ENCODE measurements at regions of chr10 and their contacts with region 1.

Region 1: DNA sequence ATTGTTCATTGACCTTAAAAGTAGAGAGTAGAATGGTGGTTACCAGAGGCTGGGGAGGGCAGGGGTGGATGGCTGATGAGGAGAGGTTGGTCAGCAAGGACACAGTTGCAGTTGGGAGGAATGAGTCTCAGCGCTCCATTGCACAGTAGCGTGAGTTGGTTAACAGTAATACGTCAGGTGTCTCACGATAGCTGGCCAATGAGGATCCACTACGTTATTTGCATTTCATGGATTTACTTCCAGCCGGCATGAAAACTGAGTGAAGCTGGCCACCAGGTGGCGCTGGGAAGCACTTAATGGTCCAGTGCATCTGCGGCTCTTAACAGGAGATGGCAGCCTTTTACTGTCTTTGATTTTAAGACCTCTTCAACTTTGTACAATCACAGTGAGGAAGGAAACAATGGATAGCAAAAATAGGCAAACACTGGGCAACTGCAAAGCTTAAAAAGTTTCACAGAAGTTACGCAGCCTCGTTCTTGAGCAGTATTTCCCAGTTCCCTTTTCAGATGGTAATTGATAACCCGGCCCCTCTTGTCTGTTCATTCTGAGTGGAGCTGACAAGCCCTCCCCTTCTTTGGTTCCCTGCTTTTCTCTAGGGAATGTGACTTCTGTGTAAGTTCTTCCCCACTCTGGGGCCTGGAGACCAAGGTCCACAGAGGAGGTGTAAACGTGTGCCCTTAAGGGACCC is 23.7 kb downstream of the AKR1E2 start:
- DNase-seq: peak; percentile 74 to 85 (median 82)
- ATAC-seq: peak; percentile 94
- H3K4me3 ChIP-seq: no peak overlapping the region
- H3K4me3 Mint-ChIP-seq: peak overlapping the region in 2 of 10 donors; percentile 21 to 51
- H3K27ac ChIP-seq: no peak overlapping the region
- H3K27ac Mint-ChIP-seq: peak overlapping the region in 6 of 9 donors; percentile 21 to 65 (median 46)
- H3K4me1 ChIP-seq: no peaks in the 10 kb centered on the region
- H3K4me1 Mint-ChIP-seq: peaks cover 0 to 12% (median 7%) of the 10 kb centered on the region in 7 donors
- H3K27me3 ChIP-seq: no peaks in the 10 kb centered on the region
- H3K27me3 Mint-ChIP-seq: no peaks in the 10 kb centered on the region

Region 2: GRCh38 chr10:4498711-4499251 is 350.9 kb before region 1 on chr10:
- CTCF ChIA-PET with region 1: no interaction called
- POLR2A ChIA-PET with region 1: no interaction called
- intact Hi-C with region 1: no loop called
- DNase-seq: no peak
- ATAC-seq: no peak
- H3K4me3 ChIP-seq: no peak overlapping the region
- H3K4me3 Mint-ChIP-seq: no peak overlapping the region
- H3K27ac ChIP-seq: no peak overlapping the region
- H3K27ac Mint-ChIP-seq: no peak overlapping the region
- H3K4me1 ChIP-seq: no peaks in the 10 kb centered on the region
- H3K4me1 Mint-ChIP-seq: no peaks in the 10 kb centered on the region
- H3K27me3 ChIP-seq: no peaks in the 10 kb centered on the region
- H3K27me3 Mint-ChIP-seq: peaks cover 0 to 37% (median 0%) of the 10 kb centered on the region in 5 donors

Region 3: DNA sequence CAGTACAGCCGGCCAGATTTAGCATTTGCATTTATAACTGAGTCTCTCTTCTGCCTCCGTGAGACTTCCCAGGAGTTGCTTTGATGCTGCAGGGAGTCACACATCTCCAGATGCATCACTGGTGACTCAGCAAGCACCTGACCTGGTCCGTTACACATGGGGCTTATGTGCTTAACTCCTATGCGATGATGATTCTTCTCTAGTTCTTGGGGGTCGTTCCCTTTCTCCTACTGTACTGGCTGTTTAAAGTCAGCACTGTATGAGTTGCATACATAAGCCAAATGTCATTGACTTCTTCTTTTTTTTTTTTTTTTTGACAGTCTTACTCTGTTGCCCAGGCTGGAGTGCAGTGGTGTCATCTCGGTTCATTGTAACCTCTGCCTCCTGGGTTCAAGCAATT is 36.7 kb before region 1 on chr10:
- CTCF ChIA-PET with region 1: interaction called, 23 read pairs
- POLR2A ChIA-PET with region 1: no interaction called
- intact Hi-C with region 1: loop called (anchors 1 kb)
- DNase-seq: no peak
- ATAC-seq: peak; percentile 35
- H3K4me3 ChIP-seq: no peak overlapping the region
- H3K4me3 Mint-ChIP-seq: no peak overlapping the region
- H3K27ac ChIP-seq: no peak overlapping the region
- H3K27ac Mint-ChIP-seq: no peak overlapping the region
- H3K4me1 ChIP-seq: no peaks in the 10 kb centered on the region
- H3K4me1 Mint-ChIP-seq: peaks cover 0 to 4% (median 0%) of the 10 kb centered on the region in 7 donors
- H3K27me3 ChIP-seq: no peaks in the 10 kb centered on the region
- H3K27me3 Mint-ChIP-seq: peaks cover 0 to 14% (median 8%) of the 10 kb centered on the region in 5 donors

Region 4: GRCh38 chr10:4981722-4982471 is 132.2 kb after region 1 on chr10:
- CTCF ChIA-PET with region 1: interaction called, 8 read pairs
- POLR2A ChIA-PET with region 1: no interaction called
- intact Hi-C with region 1: loop called in 1 of 2 experiments (anchors 10 kb)
- DNase-seq: peak in 2 of 9 donors; percentile 3 to 18
- ATAC-seq: no peak
- H3K4me3 ChIP-seq: no peak overlapping the region
- H3K4me3 Mint-ChIP-seq: no peak overlapping the region
- H3K27ac ChIP-seq: no peak overlapping the region
- H3K27ac Mint-ChIP-seq: peak overlapping the region in 1 of 9 donors; percentile 67
- H3K4me1 ChIP-seq: no peaks in the 10 kb centered on the region
- H3K4me1 Mint-ChIP-seq: peaks cover 0 to 9% (median 0%) of the 10 kb centered on the region in 7 donors
- H3K27me3 ChIP-seq: no peaks in the 10 kb centered on the region
- H3K27me3 Mint-ChIP-seq: peaks cover 0 to 5% (median 0%) of the 10 kb centered on the region in 5 donors

Region 5: GRCh38 chr10:5283305-5284158 is 433.8 kb after region 1 on chr10:
- CTCF ChIA-PET with region 1: interaction called, 36 read pairs
- POLR2A ChIA-PET with region 1: no interaction called
- intact Hi-C with region 1: loop called (anchors 1 kb)
- DNase-seq: peak; percentile 19 to 60 (median 46)
- ATAC-seq: peak; percentile 89
- H3K4me3 ChIP-seq: no peak overlapping the region
- H3K4me3 Mint-ChIP-seq: peak overlapping the region; percentile 4 to 67 (median 56)
- H3K27ac ChIP-seq: no peak overlapping the region
- H3K27ac Mint-ChIP-seq: peak overlapping the region in 4 of 9 donors; percentile 12 to 81 (median 42)
- H3K4me1 ChIP-seq: peaks cover 6 to 11% of the 10 kb centered on the region in 2 donors
- H3K4me1 Mint-ChIP-seq: peaks cover 10 to 37% (median 25%) of the 10 kb centered on the region in 7 donors
- H3K27me3 ChIP-seq: no peaks in the 10 kb centered on the region
- H3K27me3 Mint-ChIP-seq: peaks cover 0 to 26% (median 0%) of the 10 kb centered on the region in 5 donors

Region 6: GRCh38 chr10:5385224-5385623 is 535.5 kb after region 1 on chr10:
- CTCF ChIA-PET with region 1: interaction called, 27 read pairs
- POLR2A ChIA-PET with region 1: no interaction called
- intact Hi-C with region 1: loop called (anchors 1 kb)
- DNase-seq: no peak
- ATAC-seq: no peak
- H3K4me3 ChIP-seq: no peak overlapping the region
- H3K4me3 Mint-ChIP-seq: peak overlapping the region in 1 of 10 donors; percentile 13
- H3K27ac ChIP-seq: no peak overlapping the region
- H3K27ac Mint-ChIP-seq: no peak overlapping the region
- H3K4me1 ChIP-seq: no peaks in the 10 kb centered on the region
- H3K4me1 Mint-ChIP-seq: peaks cover 0 to 5% (median 0%) of the 10 kb centered on the region in 7 donors
- H3K27me3 ChIP-seq: no peaks in the 10 kb centered on the region
- H3K27me3 Mint-ChIP-seq: peaks cover 0 to 15% (median 5%) of the 10 kb centered on the region in 5 donors

Region 7: DNA sequence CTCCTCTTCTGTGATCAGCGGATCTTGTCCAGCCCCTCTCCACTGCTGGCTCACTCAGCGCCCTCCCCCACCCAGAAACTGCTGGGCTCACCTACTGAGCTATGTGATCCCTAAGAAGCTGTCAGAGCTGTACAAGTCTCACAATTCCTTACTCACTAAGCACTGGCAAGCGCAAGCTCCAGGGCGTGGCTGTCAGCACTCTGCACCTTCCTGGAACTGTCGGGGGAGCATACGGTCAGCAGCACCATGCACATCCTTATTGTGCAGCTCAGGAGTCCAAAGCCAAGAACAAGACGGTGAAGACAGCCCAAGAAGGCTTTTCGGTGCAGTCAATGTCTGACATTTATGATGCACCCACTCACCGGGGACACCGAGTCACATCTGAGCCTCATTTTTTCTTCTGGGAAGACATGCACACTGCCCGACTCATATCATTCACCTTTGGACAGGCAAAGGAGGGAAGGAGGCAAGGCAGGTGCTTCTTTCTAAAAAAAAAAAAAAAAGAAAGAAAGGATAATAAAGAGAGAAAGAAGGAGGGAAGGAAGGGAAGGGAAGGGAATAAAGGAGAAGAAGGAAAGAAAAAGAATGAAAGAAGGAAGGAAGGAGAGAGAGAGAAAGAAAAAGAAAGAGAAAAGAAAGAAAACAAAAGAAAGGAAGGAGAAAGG is 760.4 kb after region 1 on chr10:
- CTCF ChIA-PET with region 1: interaction called, 3 read pairs
- POLR2A ChIA-PET with region 1: no interaction called
- intact Hi-C with region 1: loop called in 1 of 2 experiments (anchors 5 kb)
- DNase-seq: no peak
- ATAC-seq: no peak
- H3K4me3 ChIP-seq: no peak overlapping the region
- H3K4me3 Mint-ChIP-seq: no peak overlapping the region
- H3K27ac ChIP-seq: no peak overlapping the region
- H3K27ac Mint-ChIP-seq: peak overlapping the region in 1 of 9 donors; percentile 75
- H3K4me1 ChIP-seq: no peaks in the 10 kb centered on the region
- H3K4me1 Mint-ChIP-seq: peaks cover 0 to 5% (median 0%) of the 10 kb centered on the region in 7 donors
- H3K27me3 ChIP-seq: no peaks in the 10 kb centered on the region
- H3K27me3 Mint-ChIP-seq: peaks cover 0 to 12% (median 0%) of the 10 kb centered on the region in 5 donors

Region 8: DNA sequence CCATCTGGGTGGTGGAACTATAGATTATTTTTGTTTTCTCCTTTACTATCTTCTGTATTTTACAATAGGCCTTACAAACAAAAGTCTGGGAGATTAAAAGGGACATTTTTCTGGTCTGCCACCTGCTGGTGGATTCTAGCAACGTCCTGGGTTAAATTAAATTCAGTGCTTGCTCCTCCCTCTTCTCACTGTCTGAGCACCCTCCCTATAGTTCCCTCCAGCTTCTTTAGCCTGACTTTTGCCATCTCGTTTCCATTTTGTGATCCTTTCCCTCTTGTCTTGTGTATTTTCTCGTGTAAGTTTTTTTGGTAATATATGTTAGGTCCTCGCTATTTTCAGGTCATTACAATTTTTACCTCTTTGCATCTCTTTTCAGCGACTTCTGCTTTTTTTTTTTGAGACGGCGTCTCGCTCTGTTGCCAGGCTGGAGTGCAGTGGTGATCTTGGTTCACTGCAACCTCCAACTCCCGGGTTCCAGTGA is 1023.9 kb after region 1 on chr10:
- CTCF ChIA-PET with region 1: no interaction called
- POLR2A ChIA-PET with region 1: no interaction called
- intact Hi-C with region 1: loop called in 1 of 2 experiments (anchors 5 kb)
- DNase-seq: peak; percentile 42 to 76 (median 67)
- ATAC-seq: peak; percentile 96
- H3K4me3 ChIP-seq: no peak overlapping the region
- H3K4me3 Mint-ChIP-seq: peak overlapping the region in 8 of 10 donors; percentile 46 to 76 (median 58)
- H3K27ac ChIP-seq: no peak overlapping the region
- H3K27ac Mint-ChIP-seq: peak overlapping the region in 2 of 9 donors; percentile 60 to 74
- H3K4me1 ChIP-seq: no peaks in the 10 kb centered on the region
- H3K4me1 Mint-ChIP-seq: peaks cover 2 to 10% (median 5%) of the 10 kb centered on the region in 7 donors
- H3K27me3 ChIP-seq: no peaks in the 10 kb centered on the region
- H3K27me3 Mint-ChIP-seq: peaks cover 0 to 4% (median 0%) of the 10 kb centered on the region in 5 donors